ENCODE measurements at regions of chr2 and their contacts with region 1.

Region 1: DNA sequence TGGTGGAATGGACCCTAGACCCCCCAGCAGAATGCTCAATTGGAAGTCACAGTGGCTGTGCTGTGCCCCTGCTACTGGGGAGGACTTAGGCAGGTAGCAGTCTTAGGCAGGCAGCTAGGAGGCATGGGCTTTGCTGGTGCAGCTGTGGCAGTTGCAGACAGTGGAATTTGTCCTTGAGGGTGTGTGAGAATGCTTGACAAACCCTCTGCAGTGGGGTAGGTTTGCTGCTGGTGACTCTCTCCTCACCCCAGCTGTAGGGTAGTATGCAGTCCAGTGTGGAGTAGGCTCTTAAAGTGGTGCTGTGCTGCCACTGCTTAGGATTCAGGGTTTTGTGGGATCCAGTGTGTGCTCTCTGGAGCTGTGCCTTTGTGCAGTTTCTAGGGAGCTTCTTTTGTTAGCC is 61.3 kb downstream of the NUP35 start:
- DNase-seq: no peak
- H3K4me3 ChIP-seq: no peak overlapping the region
- CTCF ChIP-seq: no peak

Region 2: GRCh38 chr2:183292028-183292427 is 106.5 kb after region 1 on chr2:
- in situ Hi-C with region 1: loop called (anchors 5 kb)
- DNase-seq: no peak
- H3K4me3 ChIP-seq: no peak overlapping the region
- CTCF ChIP-seq: no peak

Measured in astrocyte of the cerebellum (primary cell).